ENCODE measurements at regions of chr22 and their contacts with region 1.

Region 1: DNA sequence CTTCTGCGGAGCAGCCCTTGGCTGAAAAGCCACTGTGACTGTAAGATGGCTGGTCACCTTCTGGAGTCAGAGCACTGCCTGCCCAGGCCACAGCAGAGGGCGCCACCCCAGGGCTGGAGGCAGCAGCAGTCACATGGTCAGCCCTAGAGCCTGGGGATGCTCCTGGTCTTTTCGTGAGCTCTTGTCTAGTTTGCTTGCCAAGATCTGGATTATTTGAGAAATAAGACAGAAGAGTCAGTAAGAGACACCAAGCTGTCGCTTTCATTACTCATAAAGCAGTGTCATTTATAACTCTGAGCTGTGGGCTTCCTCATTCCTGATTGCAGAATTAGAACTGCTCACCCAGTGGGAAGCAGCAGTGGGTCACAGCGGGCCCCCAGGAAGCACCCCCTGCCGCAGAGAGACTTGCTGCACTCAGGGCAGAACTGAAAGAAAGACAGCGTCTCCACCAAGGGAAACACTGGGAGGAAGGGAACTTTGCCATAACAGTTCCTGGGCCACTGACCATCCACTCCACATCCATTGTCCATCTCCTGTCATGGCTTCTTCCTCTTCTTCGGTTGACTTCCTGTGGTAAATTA is 56.7 kb downstream of the PPP6R2 start:
- DNase-seq: peak; percentile 21 to 72
- H3K4me3 ChIP-seq: no peak overlapping the region
- H3K27ac ChIP-seq: no peak overlapping the region
- H3K4me1 ChIP-seq: peaks cover 0 to 13% (median 3%) of the 10 kb centered on the region in 4 experiments; a peak in 5 of 7 replicates
- H3K27me3 ChIP-seq: no peaks in the 10 kb centered on the region
- CTCF ChIP-seq: peak; percentile 76 to 97 (median 93)
- EP300 ChIP-seq: no peak
- POLR2A ChIP-seq: no peak
- RAD21 ChIP-seq: peak; percentile 32 to 58; a peak in 3 of 4 replicates

Region 2: GRCh38 chr22:50423042-50423815 is 23.4 kb after region 1 on chr22:
- CTCF ChIA-PET with region 1: interaction called, 10 read pairs
- POLR2A ChIA-PET with region 1: no interaction called
- DNase-seq: no peak
- H3K4me3 ChIP-seq: no peak overlapping the region
- H3K27ac ChIP-seq: no peak overlapping the region
- H3K4me1 ChIP-seq: no peaks in the 10 kb centered on the region
- H3K27me3 ChIP-seq: no peaks in the 10 kb centered on the region
- CTCF ChIP-seq: no peak
- EP300 ChIP-seq: no peak
- POLR2A ChIP-seq: no peak
- RAD21 ChIP-seq: no peak

Measured in H1 (cell line).